ENCODE measurements at regions of chr10 and their contacts with region 1.

Region 1: GRCh38 chr10:45464958-45465567 is 91.0 kb downstream of the ALOX5 start:
- DNase-seq: peak; percentile 54 to 81 (median 72)
- ATAC-seq: peak; percentile 95
- H3K4me3 ChIP-seq: no peak overlapping the region
- H3K4me3 Mint-ChIP-seq: no peak overlapping the region
- H3K27ac ChIP-seq: no peak overlapping the region
- H3K27ac Mint-ChIP-seq: peak overlapping the region in 5 of 9 donors; percentile 5 to 83 (median 32)
- H3K4me1 ChIP-seq: peaks cover under 1 to 6% of the 10 kb centered on the region in 2 donors
- H3K4me1 Mint-ChIP-seq: peaks cover 19 to 49% (median 29%) of the 10 kb centered on the region in 7 donors
- H3K27me3 ChIP-seq: no peaks in the 10 kb centered on the region
- H3K27me3 Mint-ChIP-seq: no peaks in the 10 kb centered on the region

Region 2: GRCh38 chr10:45235798-45236231 is 229.2 kb before region 1 on chr10:
- CTCF ChIA-PET with region 1: no interaction called
- POLR2A ChIA-PET with region 1: interaction called, 3 read pairs
- intact Hi-C with region 1: loop called in 1 of 2 experiments (anchors 10 kb)
- DNase-seq: no peak
- ATAC-seq: no peak
- H3K4me3 ChIP-seq: no peak overlapping the region
- H3K4me3 Mint-ChIP-seq: no peak overlapping the region
- H3K27ac ChIP-seq: no peak overlapping the region
- H3K27ac Mint-ChIP-seq: no peak overlapping the region
- H3K4me1 ChIP-seq: no peaks in the 10 kb centered on the region
- H3K4me1 Mint-ChIP-seq: peaks cover 0 to 17% (median 4%) of the 10 kb centered on the region in 7 donors
- H3K27me3 ChIP-seq: no peaks in the 10 kb centered on the region
- H3K27me3 Mint-ChIP-seq: peaks cover 5 to 10% (median 6%) of the 10 kb centered on the region in 5 donors

Region 3: GRCh38 chr10:45249978-45250693 is 214.9 kb before region 1 on chr10:
- CTCF ChIA-PET with region 1: no interaction called
- POLR2A ChIA-PET with region 1: no interaction called
- intact Hi-C with region 1: loop called in 1 of 2 experiments (anchors 2 kb)
- DNase-seq: peak in 7 of 9 donors; percentile 20 to 70 (median 50)
- ATAC-seq: peak; percentile 72
- H3K4me3 ChIP-seq: no peak overlapping the region
- H3K4me3 Mint-ChIP-seq: peak overlapping the region in 6 of 10 donors; percentile 3 to 64 (median 46)
- H3K27ac ChIP-seq: no peak overlapping the region
- H3K27ac Mint-ChIP-seq: no peak overlapping the region
- H3K4me1 ChIP-seq: peaks cover 0 to 4% of the 10 kb centered on the region in 2 donors
- H3K4me1 Mint-ChIP-seq: peaks cover 0 to 20% (median 6%) of the 10 kb centered on the region in 7 donors
- H3K27me3 ChIP-seq: no peaks in the 10 kb centered on the region
- H3K27me3 Mint-ChIP-seq: peaks cover 0 to 19% (median 4%) of the 10 kb centered on the region in 5 donors

Region 4: GRCh38 chr10:45379951-45380461 is 85.1 kb before region 1 on chr10:
- CTCF ChIA-PET with region 1: no interaction called
- POLR2A ChIA-PET with region 1: no interaction called
- intact Hi-C with region 1: no loop called
- DNase-seq: no peak
- ATAC-seq: peak; percentile 80
- H3K4me3 ChIP-seq: no peak overlapping the region
- H3K4me3 Mint-ChIP-seq: no peak overlapping the region
- H3K27ac ChIP-seq: no peak overlapping the region
- H3K27ac Mint-ChIP-seq: no peak overlapping the region
- H3K4me1 ChIP-seq: no peaks in the 10 kb centered on the region
- H3K4me1 Mint-ChIP-seq: peaks cover 0 to 19% (median 9%) of the 10 kb centered on the region in 7 donors
- H3K27me3 ChIP-seq: no peaks in the 10 kb centered on the region
- H3K27me3 Mint-ChIP-seq: peaks cover 0 to 28% (median 3%) of the 10 kb centered on the region in 5 donors

Region 5: DNA sequence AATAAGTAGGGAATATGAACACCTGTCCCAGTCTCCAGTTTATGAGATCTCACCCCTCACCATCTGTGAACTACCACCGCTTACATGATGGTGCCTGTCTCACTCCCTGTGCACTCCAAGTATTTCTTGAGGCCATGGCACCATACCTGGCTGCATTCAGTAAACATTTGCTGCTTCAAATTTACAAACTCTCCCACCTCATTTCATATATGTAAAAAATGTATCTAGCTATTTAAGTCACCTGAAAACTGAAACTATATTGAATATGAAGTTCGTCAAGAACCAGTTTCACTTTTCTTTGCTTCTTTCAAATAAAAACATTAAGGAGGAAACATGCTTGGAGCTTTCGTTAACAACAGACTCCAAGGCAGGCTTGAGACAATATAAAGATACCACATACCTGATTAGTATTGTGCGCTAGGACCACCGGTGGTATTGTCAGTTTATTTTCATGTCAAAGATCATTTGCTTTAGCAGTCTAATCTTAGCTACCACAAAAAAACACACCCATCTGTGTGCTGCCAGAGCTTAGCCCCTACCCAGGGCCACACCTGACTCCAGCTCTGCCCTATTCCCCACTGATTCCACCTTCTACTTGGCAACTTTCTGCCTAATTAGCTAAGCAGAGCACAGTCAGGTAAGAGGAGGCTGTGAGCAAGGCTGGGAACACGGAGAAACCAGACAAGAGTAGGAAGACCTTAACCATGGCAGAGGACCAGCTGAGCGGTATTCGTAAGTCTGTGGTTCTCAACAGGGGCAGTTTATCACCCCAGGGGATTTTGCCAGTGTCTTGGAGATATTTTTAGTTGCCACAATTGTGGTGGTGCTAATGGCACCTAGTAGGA is 115.5 kb after region 1 on chr10:
- CTCF ChIA-PET with region 1: no interaction called
- POLR2A ChIA-PET with region 1: no interaction called
- intact Hi-C with region 1: loop called in 1 of 2 experiments (anchors 5 kb)
- DNase-seq: peak in 7 of 9 donors; percentile 25 to 45 (median 30)
- ATAC-seq: peak; percentile 80
- H3K4me3 ChIP-seq: peak overlapping the region; percentile 61
- H3K4me3 Mint-ChIP-seq: peak overlapping the region; percentile 88 to 97 (median 92)
- H3K27ac ChIP-seq: peak overlapping the region; percentile 78
- H3K27ac Mint-ChIP-seq: peak overlapping the region; percentile 89 to 97 (median 95)
- H3K4me1 ChIP-seq: peaks cover 12 to 14% of the 10 kb centered on the region in 2 donors
- H3K4me1 Mint-ChIP-seq: peaks cover 24 to 48% (median 43%) of the 10 kb centered on the region in 7 donors
- H3K27me3 ChIP-seq: no peaks in the 10 kb centered on the region
- H3K27me3 Mint-ChIP-seq: peaks cover 0 to 11% (median 0%) of the 10 kb centered on the region in 5 donors

Region 6: GRCh38 chr10:45809837-45810236 is 344.8 kb after region 1 on chr10:
- CTCF ChIA-PET with region 1: no interaction called
- POLR2A ChIA-PET with region 1: no interaction called
- intact Hi-C with region 1: loop called in 1 of 2 experiments (anchors 10 kb)
- DNase-seq: no peak
- ATAC-seq: no peak
- H3K4me3 ChIP-seq: no peak overlapping the region
- H3K4me3 Mint-ChIP-seq: no peak overlapping the region
- H3K27ac ChIP-seq: no peak overlapping the region
- H3K27ac Mint-ChIP-seq: no peak overlapping the region
- H3K4me1 ChIP-seq: no peaks in the 10 kb centered on the region
- H3K4me1 Mint-ChIP-seq: no peaks in the 10 kb centered on the region
- H3K27me3 ChIP-seq: no peaks in the 10 kb centered on the region
- H3K27me3 Mint-ChIP-seq: peaks cover 0 to 10% (median 4%) of the 10 kb centered on the region in 5 donors

Measured in naive thymus-derived CD4-positive, alpha-beta T cell (primary cell).